ENCODE measurements at regions of chr16 and their contacts with region 1.

Region 1: DNA sequence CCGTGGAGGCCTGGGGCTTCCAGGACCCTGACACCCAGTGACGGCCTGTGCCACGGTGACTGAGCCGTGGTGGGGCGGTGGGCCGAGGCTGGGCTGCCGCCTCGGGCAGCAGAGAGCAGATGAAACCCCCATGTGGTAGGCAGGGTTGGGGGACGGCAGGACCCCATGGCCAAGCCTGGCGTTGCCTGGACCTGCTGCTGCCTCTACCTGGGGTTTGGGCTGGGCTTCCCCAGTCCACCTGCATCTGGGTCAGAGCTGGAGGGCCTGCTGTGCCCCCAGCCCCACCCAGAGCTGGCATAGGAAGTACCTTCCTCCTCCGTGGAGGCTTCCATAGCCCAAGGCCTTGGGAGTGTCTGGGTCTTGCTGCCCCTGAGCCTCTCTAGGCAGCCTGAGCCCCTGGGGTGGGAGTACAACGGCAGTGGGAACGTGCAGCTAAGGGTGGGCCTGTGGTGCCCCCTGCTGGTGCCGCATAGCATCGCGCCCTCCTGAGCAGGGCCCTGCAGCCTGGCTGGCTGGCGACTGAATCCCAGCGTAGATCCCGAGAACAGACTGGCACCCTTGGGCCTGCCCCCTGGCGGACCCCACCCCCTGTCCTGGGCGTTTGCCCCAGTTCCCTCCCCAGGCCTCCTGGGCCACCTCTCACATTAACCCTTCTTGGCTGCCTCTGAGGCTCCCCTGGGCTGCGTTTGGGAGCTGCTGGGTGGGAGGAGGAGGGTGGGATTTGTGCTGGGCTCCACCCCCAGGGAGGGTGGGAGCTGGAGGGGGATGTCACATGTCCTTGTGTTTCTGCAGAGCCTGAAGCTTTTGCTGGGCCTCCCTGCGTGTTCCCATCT is 12.6 kb upstream of the ATP6V0C start:
- DNase-seq: peak; percentile 77 to 98
- H3K4me3 ChIP-seq: peak overlapping the region in 3 of 4 experiments; percentile 14 to 60 (median 24); a peak in 5 of 8 replicates
- H3K27ac ChIP-seq: no peak overlapping the region; the same call in 1 of the 2 replicates
- H3K4me1 ChIP-seq: peaks cover 0 to 16% (median 9%) of the 10 kb centered on the region in 4 experiments; a peak in 6 of 7 replicates
- H3K27me3 ChIP-seq: no peaks in the 10 kb centered on the region; a peak in 1 of 7 replicates
- CTCF ChIP-seq: peak; percentile 91 to 100 (median 96)
- EP300 ChIP-seq: peak in 1 of 2 experiments; percentile 39; a peak in 1 of 3 replicates
- POLR2A ChIP-seq: no peak
- RAD21 ChIP-seq: peak; percentile 94 to 96

Region 2: DNA sequence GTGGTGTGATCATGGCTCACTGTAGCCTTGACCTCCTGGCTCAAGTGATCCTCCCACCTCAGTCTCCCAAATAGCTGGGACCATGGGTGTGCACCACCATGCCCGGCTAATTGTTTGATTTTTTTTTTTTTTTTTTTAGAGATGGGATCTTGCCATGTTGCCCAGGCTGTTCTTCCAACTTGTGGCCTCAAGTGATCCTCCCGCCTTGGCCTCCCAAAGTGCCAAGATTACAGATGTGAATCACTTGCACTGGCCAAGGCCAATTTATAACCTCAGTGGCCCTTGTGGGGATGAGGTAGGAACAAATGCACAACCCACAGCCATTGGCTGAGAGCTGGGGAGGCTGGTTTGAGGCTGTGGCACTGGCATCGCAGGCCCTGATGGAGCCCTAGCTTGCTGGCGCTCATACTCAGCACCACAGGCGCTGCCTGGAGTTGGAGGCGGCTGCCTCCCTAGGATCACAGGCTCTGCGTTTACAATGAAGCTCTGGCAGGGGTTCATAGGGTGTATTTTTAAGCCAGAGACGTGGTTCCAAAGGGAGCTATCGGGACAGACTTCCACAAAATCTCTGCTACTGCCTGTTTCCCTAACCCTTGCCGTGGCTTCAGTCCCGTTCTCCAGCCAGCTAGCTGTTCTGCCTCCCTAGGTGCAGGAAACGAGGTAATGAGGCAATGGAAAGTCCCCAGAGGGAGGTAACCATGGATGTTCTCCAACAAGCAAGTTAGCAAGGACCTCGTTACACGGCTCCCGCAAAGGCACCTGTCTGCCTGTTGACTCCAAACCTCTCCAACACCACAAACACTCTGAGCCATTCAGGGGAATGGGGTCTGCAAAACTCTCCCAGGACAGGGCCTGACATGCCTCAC is 163.5 kb before region 1 on chr16:
- CTCF ChIA-PET with region 1: interaction called, 10 read pairs
- POLR2A ChIA-PET with region 1: no interaction called
- DNase-seq: peak in 1 of 2 experiments; percentile 29
- H3K4me3 ChIP-seq: no peak overlapping the region
- H3K27ac ChIP-seq: no peak overlapping the region
- H3K4me1 ChIP-seq: peaks cover 0 to 3% (median 1%) of the 10 kb centered on the region in 4 experiments; a peak in 2 of 7 replicates
- H3K27me3 ChIP-seq: peaks cover 11 to 26% (median 24%) of the 10 kb centered on the region in 4 experiments
- CTCF ChIP-seq: no peak
- EP300 ChIP-seq: no peak
- POLR2A ChIP-seq: no peak
- RAD21 ChIP-seq: no peak

Region 3: DNA sequence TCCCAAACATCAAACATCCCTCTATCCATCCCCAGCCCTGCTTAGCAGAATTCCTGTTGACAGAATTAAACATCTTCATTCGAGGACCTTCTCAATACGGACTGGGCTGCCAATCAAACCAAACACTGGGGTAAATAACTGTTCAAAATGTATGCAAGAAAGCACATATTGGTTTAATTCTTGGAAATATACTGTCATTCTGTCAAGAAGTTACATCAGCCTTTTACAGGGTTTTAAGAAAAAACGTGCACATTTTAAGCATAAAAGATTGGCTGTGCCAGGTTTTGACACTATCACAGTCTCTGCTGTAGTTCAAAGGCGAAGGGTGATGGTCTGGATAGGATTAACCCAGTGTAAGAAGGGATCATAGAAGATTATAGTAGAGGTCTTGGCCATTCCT is 97.0 kb before region 1 on chr16:
- CTCF ChIA-PET with region 1: no interaction called
- POLR2A ChIA-PET with region 1: no interaction called
- DNase-seq: no peak
- H3K4me3 ChIP-seq: no peak overlapping the region
- H3K27ac ChIP-seq: no peak overlapping the region
- H3K4me1 ChIP-seq: no peaks in the 10 kb centered on the region
- H3K27me3 ChIP-seq: no peaks in the 10 kb centered on the region
- CTCF ChIP-seq: no peak
- EP300 ChIP-seq: no peak
- POLR2A ChIP-seq: no peak
- RAD21 ChIP-seq: no peak

Region 4: GRCh38 chr16:2467521-2468151 is 33.5 kb before region 1 on chr16:
- CTCF ChIA-PET with region 1: interaction called, 18 read pairs
- POLR2A ChIA-PET with region 1: interaction called, 7 read pairs
- DNase-seq: peak in 1 of 2 experiments; percentile 85
- H3K4me3 ChIP-seq: peak overlapping the region; percentile 36 to 73 (median 44)
- H3K27ac ChIP-seq: no peak overlapping the region
- H3K4me1 ChIP-seq: peaks cover 0 to 35% (median 26%) of the 10 kb centered on the region in 4 experiments; a peak in 6 of 7 replicates
- H3K27me3 ChIP-seq: peaks cover 17 to 44% (median 39%) of the 10 kb centered on the region in 4 experiments
- CTCF ChIP-seq: no peak
- EP300 ChIP-seq: no peak
- POLR2A ChIP-seq: no peak; a peak in 1 of 3 replicates
- RAD21 ChIP-seq: no peak

Region 5: DNA sequence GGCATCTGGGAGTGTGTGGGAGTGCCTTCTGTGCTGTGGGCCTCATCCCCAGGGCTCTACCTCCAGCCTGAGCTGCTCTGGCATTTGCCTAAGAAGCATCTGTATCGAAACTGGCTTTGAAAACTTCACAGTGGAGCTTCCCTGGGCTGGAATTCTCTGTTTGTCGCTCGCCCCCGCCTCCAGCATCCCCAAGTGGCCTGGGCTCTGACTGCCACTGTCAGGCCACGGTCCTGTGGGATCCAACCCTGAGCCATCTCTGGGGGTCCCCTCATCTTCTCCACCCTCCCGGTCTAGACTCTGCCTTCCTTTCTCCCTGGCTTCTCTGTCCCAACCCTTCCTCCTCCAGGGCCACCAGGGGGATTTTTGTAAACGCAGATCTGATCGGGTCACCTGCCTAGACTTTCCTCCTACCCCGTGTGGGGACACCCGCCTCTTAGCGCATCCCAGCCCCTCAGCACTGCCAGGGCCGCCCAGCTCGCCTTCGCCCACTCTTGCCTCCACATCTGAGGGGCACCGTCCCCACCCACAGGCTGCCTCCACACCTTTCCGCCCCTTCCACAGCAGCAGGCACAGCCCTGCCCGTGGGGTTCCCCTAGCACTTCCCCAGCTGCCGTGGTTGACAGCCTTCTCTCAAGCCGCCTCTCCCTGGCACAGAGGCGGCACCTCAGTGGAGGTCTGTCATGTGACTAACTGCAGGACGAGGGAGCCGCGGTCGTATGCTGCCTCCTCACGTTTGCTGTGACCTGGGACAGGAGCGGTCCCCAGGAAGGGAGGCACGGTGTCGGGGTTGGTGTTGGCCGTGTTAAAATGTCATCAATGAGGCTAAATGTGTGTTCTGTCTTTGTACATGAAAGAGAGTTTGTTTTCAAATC is 14.3 kb before region 1 on chr16:
- CTCF ChIA-PET with region 1: interaction called, 32 read pairs
- POLR2A ChIA-PET with region 1: interaction called, 4 read pairs
- DNase-seq: no peak
- H3K4me3 ChIP-seq: no peak overlapping the region
- H3K27ac ChIP-seq: no peak overlapping the region
- H3K4me1 ChIP-seq: peaks cover 0 to 3% (median 0%) of the 10 kb centered on the region in 4 experiments; a peak in 1 of 7 replicates
- H3K27me3 ChIP-seq: no peaks in the 10 kb centered on the region; a peak in 1 of 7 replicates
- CTCF ChIP-seq: peak in 1 of 3 experiments; percentile 21; a peak in 1 of 4 replicates
- EP300 ChIP-seq: no peak
- POLR2A ChIP-seq: no peak
- RAD21 ChIP-seq: peak; percentile 40 to 47; a peak in 2 of 4 replicates

Measured in H1 (cell line).